HEK293 (cell line): ENCODE measurements at regions of chr3 and their contacts with region 1.

Region 1: GRCh38 chr3:4734454-4734853 is 241.3 kb downstream of the ITPR1 start:
- H3K4me3 ChIP-seq: no peak overlapping the region
- H3K27ac ChIP-seq: no peak overlapping the region
- H3K4me1 ChIP-seq: peaks cover 22% of the 10 kb centered on the region
- CTCF ChIP-seq: no peak

Region 2: GRCh38 chr3:4703054-4703480 is 31.4 kb before region 1 on chr3:
- CTCF ChIA-PET with region 1: no interaction called
- POLR2A ChIA-PET with region 1: no interaction called
- H3K4me3 ChIP-seq: no peak overlapping the region
- H3K27ac ChIP-seq: no peak overlapping the region
- H3K4me1 ChIP-seq: no peaks in the 10 kb centered on the region
- CTCF ChIP-seq: no peak

Region 3: GRCh38 chr3:4722103-4722502 is 12.4 kb before region 1 on chr3:
- CTCF ChIA-PET with region 1: interaction called, 16 read pairs
- POLR2A ChIA-PET with region 1: interaction called, 4 read pairs
- H3K4me3 ChIP-seq: no peak overlapping the region
- H3K27ac ChIP-seq: no peak overlapping the region
- H3K4me1 ChIP-seq: no peaks in the 10 kb centered on the region
- CTCF ChIP-seq: peak; percentile 27; the same call in 1 of the 2 replicates

Region 4: DNA sequence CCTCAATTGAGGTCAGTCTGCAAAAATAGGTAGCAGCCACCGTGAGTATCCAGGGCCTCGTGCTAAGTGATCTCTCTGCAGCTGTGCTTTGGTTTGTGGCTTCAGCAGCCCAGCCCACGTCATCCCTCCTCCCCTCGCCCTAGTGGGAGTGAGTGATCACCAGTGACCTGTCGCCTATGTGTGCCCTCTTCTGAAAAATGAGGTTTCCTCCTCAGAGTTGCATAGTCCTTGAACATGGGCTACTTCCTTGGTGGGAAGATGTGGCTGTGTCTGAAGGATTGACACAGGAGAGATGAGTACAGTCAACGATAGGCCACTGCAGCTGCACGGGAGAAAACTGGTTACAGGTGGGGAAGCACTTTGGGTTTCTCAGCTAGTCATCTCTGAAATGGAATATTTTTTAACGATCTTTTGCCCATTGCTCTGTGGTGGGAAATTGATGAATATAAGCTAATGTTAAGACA is 100.0 kb after region 1 on chr3:
- CTCF ChIA-PET with region 1: no interaction called
- POLR2A ChIA-PET with region 1: no interaction called
- H3K4me3 ChIP-seq: no peak overlapping the region
- H3K27ac ChIP-seq: no peak overlapping the region
- H3K4me1 ChIP-seq: peaks cover 7% of the 10 kb centered on the region
- CTCF ChIP-seq: no peak

Region 5: GRCh38 chr3:5366746-5367145 is 632.3 kb after region 1 on chr3:
- CTCF ChIA-PET with region 1: no interaction called
- POLR2A ChIA-PET with region 1: no interaction called
- H3K4me3 ChIP-seq: no peak overlapping the region
- H3K27ac ChIP-seq: no peak overlapping the region
- H3K4me1 ChIP-seq: no peaks in the 10 kb centered on the region
- CTCF ChIP-seq: no peak